ENCODE measurements at regions of chr4 and their contacts with region 1.

Region 1: DNA sequence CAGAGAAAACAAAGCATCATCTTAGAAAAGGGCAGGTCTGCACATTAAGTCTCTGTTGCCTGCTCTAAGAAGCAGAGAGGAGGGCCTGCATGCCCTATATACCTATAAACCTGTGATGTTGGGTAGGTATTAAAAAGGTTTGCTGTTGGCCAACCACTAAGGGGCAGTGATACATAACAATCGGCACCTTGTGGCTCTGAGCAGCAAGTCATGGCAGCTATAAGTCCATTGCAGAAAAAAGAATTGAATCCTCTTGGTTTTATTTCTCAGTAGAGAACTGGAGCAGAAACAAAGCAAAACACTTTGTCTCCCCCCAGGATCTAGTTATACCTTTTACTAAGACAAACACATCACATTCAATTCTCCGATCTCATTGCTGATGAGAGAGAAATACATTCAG is 1364.4 kb downstream of the STIM2 start:
- DNase-seq: peak; percentile 45
- H3K4me3 ChIP-seq: no peak overlapping the region
- H3K27ac ChIP-seq: no peak overlapping the region
- H3K4me1 ChIP-seq: peaks cover 31% of the 10 kb centered on the region
- H3K27me3 ChIP-seq: no peaks in the 10 kb centered on the region
- CTCF ChIP-seq: peak; percentile 48

Region 2: DNA sequence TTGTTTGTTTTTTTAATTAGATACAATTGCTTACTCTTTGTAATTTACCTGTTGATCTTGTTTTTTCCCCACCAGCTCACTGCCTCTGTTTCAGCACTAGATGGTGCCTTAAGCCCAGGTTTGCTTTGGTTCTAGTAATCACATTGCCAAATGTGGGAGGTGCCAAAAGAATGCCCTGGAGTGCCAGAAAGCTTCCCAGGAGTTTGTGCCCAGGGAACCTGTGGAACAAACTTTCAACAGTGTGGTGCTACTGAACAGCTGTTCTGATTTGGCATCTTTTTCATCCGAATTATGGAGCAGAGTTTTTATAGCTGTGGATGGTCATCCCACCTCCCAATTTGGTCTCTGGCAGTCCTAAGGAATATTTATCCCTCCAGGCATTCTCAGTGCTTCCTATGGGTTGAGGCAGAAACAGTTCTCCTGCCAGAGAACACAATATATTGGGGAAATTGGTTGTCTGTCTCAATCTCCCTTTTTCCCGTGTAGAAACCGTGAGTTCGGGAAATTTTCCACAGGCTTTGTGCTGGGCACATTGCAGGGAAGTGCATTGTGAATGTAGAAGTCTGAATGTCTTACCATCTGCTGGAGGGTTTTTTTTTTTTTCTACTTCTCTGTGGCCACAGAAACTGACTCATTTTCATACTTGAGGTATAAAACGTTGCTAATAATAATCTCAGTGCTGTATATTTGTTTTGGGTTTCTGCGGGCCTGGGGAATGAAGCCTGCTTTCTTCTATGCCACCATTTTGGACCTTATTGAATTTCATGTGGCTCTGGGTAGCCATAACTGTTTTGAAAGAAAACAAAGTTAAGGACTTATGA is 363.5 kb before region 1 on chr4:
- CTCF ChIA-PET with region 1: no interaction called
- POLR2A ChIA-PET with region 1: no interaction called
- intact Hi-C with region 1: loop called (anchors 10 kb)
- DNase-seq: peak; percentile 75
- H3K4me3 ChIP-seq: no peak overlapping the region
- H3K27ac ChIP-seq: no peak overlapping the region
- H3K4me1 ChIP-seq: no peaks in the 10 kb centered on the region
- H3K27me3 ChIP-seq: no peaks in the 10 kb centered on the region
- CTCF ChIP-seq: peak; percentile 84

Region 3: GRCh38 chr4:28523681-28524190 is 298.7 kb after region 1 on chr4:
- CTCF ChIA-PET with region 1: no interaction called
- POLR2A ChIA-PET with region 1: no interaction called
- intact Hi-C with region 1: loop called (anchors 5 kb)
- DNase-seq: no peak
- H3K4me3 ChIP-seq: no peak overlapping the region
- H3K27ac ChIP-seq: no peak overlapping the region
- H3K4me1 ChIP-seq: peaks cover 21% of the 10 kb centered on the region
- H3K27me3 ChIP-seq: no peaks in the 10 kb centered on the region
- CTCF ChIP-seq: no peak